MCF 10A (cell line): ENCODE measurements at regions of chr2 and their contacts with region 1.

Region 1: DNA sequence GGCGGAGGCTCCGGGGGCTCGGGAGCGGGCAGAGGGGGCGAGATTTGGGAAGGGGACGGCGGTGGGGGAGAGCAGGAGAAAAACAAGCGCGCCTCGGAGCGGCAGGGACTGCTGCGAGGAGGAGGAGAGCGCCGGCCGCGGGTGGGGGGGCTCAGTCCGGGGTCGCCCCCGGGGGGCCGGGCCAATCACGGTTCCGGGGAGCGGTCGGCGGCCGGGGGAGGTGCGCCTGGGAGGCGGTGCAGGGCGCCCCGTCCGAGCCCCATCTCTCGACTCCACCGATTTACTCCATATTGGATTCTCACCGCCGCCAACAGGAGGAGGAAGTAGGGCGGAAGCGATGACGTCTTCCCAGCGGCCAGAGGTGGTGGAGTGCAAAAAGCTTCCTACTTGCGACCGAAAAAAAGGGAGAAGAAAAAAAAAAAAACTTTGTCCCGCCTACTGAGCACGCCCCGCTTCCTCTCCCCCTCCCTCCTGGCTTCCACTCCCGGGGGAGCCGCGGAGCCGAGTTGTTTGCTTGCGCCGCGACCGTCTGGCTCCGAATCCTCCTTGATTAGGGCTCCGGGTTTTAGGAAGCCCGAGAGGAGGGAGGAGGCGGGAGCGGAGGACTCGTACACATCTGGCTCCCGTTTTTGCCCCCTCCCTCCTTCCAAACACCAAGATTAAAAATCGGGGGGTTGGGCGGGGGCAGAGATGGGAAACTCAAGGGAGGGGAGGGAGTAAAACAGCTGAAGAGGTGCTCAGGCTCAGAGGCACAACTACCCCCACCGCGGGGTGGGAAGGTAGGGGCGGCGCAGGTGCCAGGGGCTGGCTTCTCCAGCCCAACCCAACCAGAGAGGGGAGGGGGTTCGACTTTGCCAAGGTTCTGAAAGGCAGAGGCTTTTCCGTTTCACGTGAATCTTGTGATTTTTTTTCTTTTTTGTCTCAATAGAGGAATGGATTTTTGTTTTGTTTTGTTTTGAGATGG is at the start of gene SPRED2:
- DNase-seq: peak; percentile 96
- H3K4me3 Mint-ChIP-seq: peak within 1 kb of the TSS; percentile 93
- H3K27ac Mint-ChIP-seq: peak within 1 kb of the TSS; percentile 89
- H3K4me1 Mint-ChIP-seq: peaks cover 5% of the 10 kb centered on the region
- H3K27me3 Mint-ChIP-seq: no peaks in the 10 kb centered on the region
- CTCF ChIP-seq: no peak
- total RNA-seq, gene SPRED2: 38.1 and 38.6 TPM in 2 replicates

Region 2: DNA sequence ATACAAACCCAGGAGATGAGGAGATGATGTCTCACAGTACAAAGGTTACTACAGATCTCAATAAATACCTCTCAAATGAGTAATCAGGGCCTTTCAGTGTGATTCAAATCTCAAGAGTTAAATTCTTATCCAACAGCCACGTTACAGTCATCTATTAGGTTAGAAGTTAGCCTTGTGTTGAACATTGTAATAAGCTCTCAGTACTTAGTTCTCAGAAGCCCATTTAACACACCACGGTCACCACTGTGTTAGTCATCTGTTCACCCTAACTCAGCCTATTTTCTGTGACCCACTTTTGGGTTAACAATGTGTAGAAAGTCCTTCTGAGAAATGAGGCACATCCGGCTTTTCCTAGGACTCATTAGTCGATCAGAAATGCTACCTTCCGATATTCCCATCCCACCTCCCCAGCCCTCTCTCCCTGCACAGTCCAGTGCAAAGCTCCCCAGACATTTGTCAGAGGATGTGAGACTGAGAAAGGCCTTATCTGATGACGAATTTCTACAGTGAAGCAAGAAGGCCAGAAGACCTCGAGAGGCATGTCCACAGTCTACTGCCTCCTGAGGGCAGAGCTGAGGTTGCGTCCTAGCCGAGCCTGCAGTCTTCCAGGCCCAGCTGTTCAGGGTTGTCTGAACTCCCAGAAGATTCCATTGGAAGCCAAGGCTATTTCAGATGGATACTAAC is 112.3 kb before region 1 on chr2:
- CTCF ChIA-PET with region 1: interaction called, 5 read pairs
- POLR2A ChIA-PET with region 1: interaction called, 15 read pairs
- intact Hi-C with region 1: loop called (anchors 5 kb)
- DNase-seq: peak; percentile 64
- H3K4me3 Mint-ChIP-seq: peak overlapping the region; percentile 32
- H3K27ac Mint-ChIP-seq: peak overlapping the region; percentile 67
- H3K4me1 Mint-ChIP-seq: peaks cover 35% of the 10 kb centered on the region
- H3K27me3 Mint-ChIP-seq: no peaks in the 10 kb centered on the region
- CTCF ChIP-seq: peak; percentile 24

Region 3: GRCh38 chr2:65382776-65383357 is 49.6 kb before region 1 on chr2:
- CTCF ChIA-PET with region 1: interaction called, 8 read pairs
- POLR2A ChIA-PET with region 1: interaction called, 28 read pairs
- intact Hi-C with region 1: loop called (anchors 1 kb)
- DNase-seq: peak; percentile 94
- H3K4me3 Mint-ChIP-seq: peak overlapping the region; percentile 59
- H3K27ac Mint-ChIP-seq: peak overlapping the region; percentile 81
- H3K4me1 Mint-ChIP-seq: peaks cover 60% of the 10 kb centered on the region
- H3K27me3 Mint-ChIP-seq: no peaks in the 10 kb centered on the region
- CTCF ChIP-seq: no peak

Region 4: DNA sequence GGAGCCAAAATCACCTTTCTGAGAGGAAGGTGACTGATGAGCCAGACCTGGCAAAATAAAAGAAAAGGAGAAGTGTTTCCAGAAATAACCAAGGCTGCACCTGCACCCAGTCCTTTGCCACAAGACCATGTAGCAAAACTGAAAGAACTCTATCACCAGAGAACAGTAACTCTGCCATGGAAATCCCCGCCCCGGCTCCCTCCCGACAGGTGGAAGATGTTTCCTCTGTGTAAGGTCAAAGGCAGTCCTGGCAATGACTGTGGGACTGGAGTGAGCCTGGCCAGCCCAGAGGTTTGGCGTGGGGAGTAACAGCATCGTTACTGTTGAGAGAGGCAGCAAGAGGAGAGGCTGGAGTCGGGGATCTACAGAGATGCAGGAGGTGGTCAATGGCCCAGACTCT is 42.4 kb before region 1 on chr2:
- CTCF ChIA-PET with region 1: no interaction called
- POLR2A ChIA-PET with region 1: interaction called, 25 read pairs
- intact Hi-C with region 1: no loop called
- DNase-seq: no peak
- H3K4me3 Mint-ChIP-seq: no peak overlapping the region
- H3K27ac Mint-ChIP-seq: peak overlapping the region; percentile 70
- H3K4me1 Mint-ChIP-seq: peaks cover 65% of the 10 kb centered on the region
- H3K27me3 Mint-ChIP-seq: no peaks in the 10 kb centered on the region
- CTCF ChIP-seq: no peak

Region 5: DNA sequence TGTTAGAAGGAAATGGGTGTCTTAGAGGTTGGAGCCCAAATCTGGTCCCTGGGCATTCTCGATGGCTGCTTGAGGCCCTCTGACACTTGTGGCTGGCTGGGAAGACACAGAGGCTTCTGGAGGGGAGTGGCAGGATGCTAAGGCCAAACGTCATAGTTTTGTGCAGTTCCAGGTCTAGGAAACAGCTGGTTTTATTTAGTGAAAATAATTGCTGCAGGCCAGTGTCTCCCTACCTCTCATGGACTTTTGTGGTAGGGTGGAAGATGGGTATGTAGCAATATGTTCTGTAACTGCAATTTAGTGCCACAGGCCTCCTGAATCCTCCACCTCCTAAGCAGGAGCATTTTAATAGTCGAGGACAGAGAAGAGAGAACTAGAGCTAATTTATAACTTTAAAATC is 32.1 kb after region 1 on chr2:
- CTCF ChIA-PET with region 1: no interaction called
- POLR2A ChIA-PET with region 1: no interaction called
- intact Hi-C with region 1: no loop called
- DNase-seq: no peak
- H3K4me3 Mint-ChIP-seq: no peak overlapping the region
- H3K27ac Mint-ChIP-seq: no peak overlapping the region
- H3K4me1 Mint-ChIP-seq: no peaks in the 10 kb centered on the region
- H3K27me3 Mint-ChIP-seq: no peaks in the 10 kb centered on the region
- CTCF ChIP-seq: no peak

Region 6: DNA sequence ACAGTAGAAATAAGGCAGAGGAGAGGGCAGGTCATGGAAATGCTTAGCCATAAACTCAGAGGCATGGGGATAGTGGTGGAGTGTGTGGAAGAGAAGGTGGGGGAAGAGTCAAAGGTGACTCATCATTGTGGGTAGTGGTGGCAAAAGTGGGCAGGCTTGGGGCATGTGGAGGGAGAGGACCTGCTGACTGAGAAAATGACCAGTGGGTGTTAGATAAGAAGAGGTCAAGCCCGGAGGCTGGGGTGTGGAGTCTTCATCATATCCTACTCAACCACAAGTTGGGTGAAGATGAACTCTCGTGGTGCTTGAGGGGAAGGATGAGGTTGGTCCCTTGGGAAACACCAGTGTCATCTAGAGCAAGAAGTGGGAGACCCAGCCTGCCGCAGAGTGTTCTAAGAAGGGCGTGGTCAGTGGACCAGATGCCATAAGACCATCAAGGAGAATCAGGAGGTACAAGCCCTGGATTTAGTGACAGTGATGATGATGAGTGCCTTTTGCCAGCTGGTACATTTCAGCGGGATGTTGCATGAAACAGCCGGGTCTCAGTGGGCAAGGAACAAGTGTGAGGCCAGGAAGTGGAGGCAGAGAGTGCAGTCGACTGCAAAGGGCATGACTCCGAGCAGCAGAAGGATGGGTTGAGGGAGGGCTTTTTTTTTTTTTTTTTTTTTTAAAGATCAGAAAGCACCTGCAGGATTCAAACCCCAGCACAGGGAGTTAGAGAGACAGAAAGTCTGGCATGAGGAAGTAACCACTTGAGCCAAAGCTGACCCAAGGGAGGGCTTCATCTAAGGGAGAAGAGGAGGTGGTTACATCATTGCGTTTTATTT is 122.5 kb after region 1 on chr2:
- CTCF ChIA-PET with region 1: no interaction called
- POLR2A ChIA-PET with region 1: no interaction called
- intact Hi-C with region 1: loop called (anchors 2 kb)
- DNase-seq: no peak
- H3K4me3 Mint-ChIP-seq: no peak overlapping the region
- H3K27ac Mint-ChIP-seq: no peak overlapping the region
- H3K4me1 Mint-ChIP-seq: peaks cover 22% of the 10 kb centered on the region
- H3K27me3 Mint-ChIP-seq: no peaks in the 10 kb centered on the region
- CTCF ChIP-seq: no peak

Region 7: DNA sequence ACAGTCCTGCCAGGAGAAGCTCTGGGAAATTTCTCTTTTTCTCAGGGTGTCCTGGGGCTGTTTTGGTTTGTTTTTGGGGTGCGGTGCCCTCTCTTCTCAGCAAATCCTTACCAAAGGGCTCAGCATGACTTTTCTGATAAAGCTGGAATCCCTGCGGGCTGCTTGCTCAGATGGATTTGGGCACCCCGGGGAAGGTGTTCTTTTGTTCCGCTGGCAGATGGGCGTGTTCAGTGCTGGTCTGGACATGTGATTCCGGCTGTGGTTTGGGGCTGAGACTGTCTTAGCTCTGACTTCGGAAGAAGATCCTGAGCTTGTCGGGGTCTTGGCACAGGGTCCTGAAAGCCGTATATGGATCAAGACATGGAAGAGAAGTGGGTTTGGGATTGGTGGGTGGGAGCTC is 134.1 kb after region 1 on chr2:
- CTCF ChIA-PET with region 1: interaction called, 6 read pairs
- POLR2A ChIA-PET with region 1: interaction called, 28 read pairs
- intact Hi-C with region 1: loop called (anchors 5 kb)
- DNase-seq: peak; percentile 73
- H3K4me3 Mint-ChIP-seq: peak overlapping the region; percentile 79
- H3K27ac Mint-ChIP-seq: peak overlapping the region; percentile 92
- H3K4me1 Mint-ChIP-seq: peaks cover 31% of the 10 kb centered on the region
- H3K27me3 Mint-ChIP-seq: no peaks in the 10 kb centered on the region
- CTCF ChIP-seq: no peak